ENCODE measurements at regions of chr6 and their contacts with region 1.

Region 1: DNA sequence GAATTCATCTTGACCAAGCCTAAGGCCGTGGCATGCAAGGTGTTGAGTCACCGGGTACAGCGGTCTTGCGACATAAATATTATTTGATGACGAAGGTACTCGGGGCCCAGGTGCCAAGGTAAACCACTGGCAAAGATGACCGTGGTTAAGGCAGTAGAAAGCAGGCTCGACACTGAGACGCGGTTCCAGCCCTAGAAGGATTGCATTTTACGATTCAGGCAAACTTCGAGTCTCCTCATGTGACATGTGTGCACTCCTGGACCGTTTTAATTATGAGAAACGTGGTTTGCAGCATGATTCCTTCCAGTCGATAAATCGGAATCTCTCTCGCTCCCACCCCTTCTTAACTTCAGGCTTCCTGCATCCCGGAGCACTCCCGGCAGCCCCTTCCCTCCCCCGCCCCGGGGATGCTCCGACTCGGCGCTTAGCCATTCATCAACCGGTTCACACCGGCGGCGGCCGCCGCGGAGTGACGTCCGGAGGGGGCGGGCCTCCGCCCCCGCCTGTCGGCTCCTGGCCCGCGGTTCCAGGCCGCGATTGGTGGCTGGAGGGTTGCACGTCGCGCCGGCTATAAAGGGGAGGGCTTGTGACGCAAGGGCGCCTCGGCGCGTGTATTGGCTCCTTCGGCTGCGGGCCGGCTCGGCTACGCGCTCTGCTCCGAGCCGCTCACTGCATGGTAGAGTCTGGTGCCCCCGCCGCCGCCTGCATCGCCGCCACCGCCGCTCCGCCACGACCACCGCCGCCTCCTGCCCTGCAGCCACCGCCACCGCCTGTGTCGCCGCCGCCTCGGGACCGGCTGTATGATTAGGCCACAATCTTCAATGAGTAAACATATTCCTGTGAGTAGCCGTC is at the starts of genes LOC128125822 and PTP4A1:
- DNase-seq: peak; percentile 95 to 97
- ATAC-seq: peak; percentile 74
- H3K4me3 ChIP-seq: peak within 1 kb of the TSS; percentile 87 to 99 (median 96)
- H3K27ac ChIP-seq: peak within 1 kb of the TSS; percentile 99 to 100 (median 100)
- H3K4me1 ChIP-seq: peaks cover 0 to 34% of the 10 kb centered on the region in 2 donors
- H3K27me3 ChIP-seq: no peaks in the 10 kb centered on the region
- CTCF ChIP-seq: peak in 1 of 5 experiments; percentile 14
- POLR2A ChIP-seq: peak; percentile 99 to 100
- total RNA-seq, gene PTP4A1: 30.6 to 256 (median 90.8) TPM

Region 2: GRCh38 chr6:63426844-63427243 is 145.3 kb before region 1 on chr6:
- in situ Hi-C with region 1: no loop called
- intact Hi-C with region 1: loop called (anchors 5 kb)
- DNase-seq: no peak
- ATAC-seq: peak in 1 of 2 donors; percentile 18
- H3K4me3 ChIP-seq: no peak overlapping the region
- H3K27ac ChIP-seq: no peak overlapping the region
- H3K4me1 ChIP-seq: peaks cover 14 to 16% of the 10 kb centered on the region in 2 donors
- H3K27me3 ChIP-seq: no peaks in the 10 kb centered on the region
- CTCF ChIP-seq: no peak
- POLR2A ChIP-seq: no peak

Region 3: GRCh38 chr6:63465750-63466149 is 106.4 kb before region 1 on chr6:
- in situ Hi-C with region 1: no loop called
- intact Hi-C with region 1: no loop called
- DNase-seq: no peak
- ATAC-seq: peak in 1 of 2 donors; percentile 63
- H3K4me3 ChIP-seq: no peak overlapping the region
- H3K27ac ChIP-seq: peak overlapping the region in 1 of 4 donors; percentile 28
- H3K4me1 ChIP-seq: peaks cover 0 to 6% of the 10 kb centered on the region in 2 donors
- H3K27me3 ChIP-seq: no peaks in the 10 kb centered on the region
- CTCF ChIP-seq: no peak
- POLR2A ChIP-seq: no peak

Region 4: GRCh38 chr6:63476302-63476701 is 95.8 kb before region 1 on chr6:
- in situ Hi-C with region 1: no loop called
- intact Hi-C with region 1: loop called (anchors 2 kb)
- DNase-seq: peak; percentile 11 to 43
- ATAC-seq: peak; percentile 62 to 70
- H3K4me3 ChIP-seq: peak overlapping the region in 1 of 4 donors; percentile 5
- H3K27ac ChIP-seq: peak overlapping the region; percentile 86 to 95 (median 92)
- H3K4me1 ChIP-seq: peaks cover 15 to 21% of the 10 kb centered on the region in 2 donors
- H3K27me3 ChIP-seq: no peaks in the 10 kb centered on the region
- CTCF ChIP-seq: peak in 2 of 5 experiments; percentile 12 to 17
- POLR2A ChIP-seq: no peak

Region 5: DNA sequence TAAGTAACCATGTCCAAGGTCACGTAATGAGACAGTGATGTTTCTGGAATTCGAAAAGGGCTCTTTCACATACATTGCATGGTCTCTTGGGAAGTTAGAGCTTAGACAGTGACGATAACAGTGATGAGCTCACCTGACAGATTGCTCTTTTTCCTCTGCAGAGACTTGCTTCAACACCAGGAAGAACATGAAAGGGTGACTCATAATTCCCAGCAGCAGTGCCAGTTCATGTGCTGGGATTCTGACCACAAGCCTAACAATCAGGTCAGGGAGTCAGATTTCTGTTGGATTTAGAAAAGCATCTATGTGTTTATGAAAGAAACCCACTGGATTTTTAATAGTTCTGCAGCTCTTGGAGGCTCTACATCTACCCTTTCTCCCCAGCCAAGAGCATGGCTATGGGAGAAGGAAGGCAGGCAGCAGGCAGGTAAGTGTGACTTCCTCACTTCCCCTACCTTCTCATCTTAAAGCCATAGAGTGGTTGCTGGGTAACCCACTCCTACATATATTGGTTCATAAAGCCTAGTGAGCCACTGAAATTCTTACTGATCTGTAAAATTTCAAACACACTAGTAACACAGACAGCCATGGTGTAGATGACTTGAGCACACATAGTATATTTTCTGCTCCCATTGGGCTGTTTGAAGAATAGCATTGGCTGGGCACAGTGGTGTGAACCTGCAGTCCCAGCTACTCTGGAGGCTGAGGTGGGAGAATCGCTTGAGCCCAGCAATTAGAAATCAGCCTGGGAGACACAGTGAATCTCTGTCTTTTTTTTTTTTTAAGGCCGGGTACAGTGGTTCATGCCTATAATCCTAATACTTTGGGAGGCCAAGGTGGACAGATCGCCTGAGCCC is 44.2 kb before region 1 on chr6:
- in situ Hi-C with region 1: no loop called
- intact Hi-C with region 1: loop called (anchors 2 kb)
- DNase-seq: peak; percentile 78 to 86
- ATAC-seq: peak; percentile 100
- H3K4me3 ChIP-seq: no peak overlapping the region
- H3K27ac ChIP-seq: peak overlapping the region; percentile 80 to 85 (median 82)
- H3K4me1 ChIP-seq: peaks cover 10 to 19% of the 10 kb centered on the region in 2 donors
- H3K27me3 ChIP-seq: no peaks in the 10 kb centered on the region
- CTCF ChIP-seq: peak in 1 of 5 experiments; percentile 12
- POLR2A ChIP-seq: no peak

Measured in gastrocnemius medialis (tissue), 4 donors.